ENCODE measurements at regions of chr2 and their contacts with region 1.

Region 1: DNA sequence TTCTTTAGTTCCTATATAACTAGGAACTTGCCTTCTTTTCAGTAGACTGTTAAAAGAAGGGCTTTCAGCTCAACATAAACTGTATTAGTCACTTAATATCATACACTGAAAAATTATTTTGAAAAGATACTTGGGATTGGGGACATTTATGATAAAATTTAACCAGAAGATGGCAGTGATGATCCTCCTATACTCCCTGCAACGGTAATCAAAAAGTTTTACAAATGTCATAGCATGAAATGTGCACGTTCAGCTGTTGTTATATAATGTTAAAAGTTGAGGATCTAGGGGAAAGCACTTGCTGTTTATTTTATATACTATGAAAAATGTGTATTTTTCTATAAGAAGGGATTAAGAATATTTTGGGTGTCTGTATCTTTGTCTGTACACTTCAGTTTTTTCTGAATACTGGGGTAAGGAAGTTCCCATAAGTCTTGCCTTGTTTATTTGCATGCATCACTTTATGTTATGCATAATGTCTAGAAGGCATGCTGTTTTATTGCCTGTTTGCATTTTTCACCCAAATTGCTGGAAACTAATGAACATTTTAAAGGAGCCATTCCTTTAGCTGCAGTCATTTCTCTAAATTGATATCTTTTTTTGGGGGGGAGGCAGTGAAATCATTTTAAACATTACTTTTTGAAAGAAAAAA is 19.0 kb downstream of the DYNC1I2 start:
- DNase-seq: no peak
- H3K4me3 Mint-ChIP-seq: no peak overlapping the region
- H3K27ac Mint-ChIP-seq: no peak overlapping the region
- H3K4me1 Mint-ChIP-seq: peaks cover 6% of the 10 kb centered on the region
- H3K27me3 Mint-ChIP-seq: no peaks in the 10 kb centered on the region

Region 2: DNA sequence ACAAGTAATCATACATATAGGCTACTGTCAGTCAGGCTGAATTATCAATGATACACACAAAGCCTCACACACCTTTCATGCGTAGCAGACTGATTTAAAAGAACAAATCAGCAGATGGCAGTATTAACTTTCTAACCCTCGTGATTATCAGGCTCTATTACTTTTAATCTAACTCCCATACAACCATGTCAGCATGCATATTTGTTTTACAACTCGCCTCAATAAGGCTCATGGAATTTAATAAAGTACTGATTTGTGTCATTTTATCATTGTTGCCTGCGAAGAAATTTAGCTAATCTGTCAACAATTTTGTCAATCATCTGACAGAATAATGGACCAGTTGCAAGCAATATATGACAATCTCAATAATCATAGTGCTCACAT is 105.0 kb after region 1 on chr2:
- intact Hi-C with region 1: loop called (anchors 5 kb)
- DNase-seq: no peak
- H3K4me3 Mint-ChIP-seq: no peak overlapping the region
- H3K27ac Mint-ChIP-seq: no peak overlapping the region
- H3K4me1 Mint-ChIP-seq: peaks cover 1% of the 10 kb centered on the region
- H3K27me3 Mint-ChIP-seq: no peaks in the 10 kb centered on the region

Region 3: GRCh38 chr2:172084734-172085459 is 378.6 kb after region 1 on chr2:
- intact Hi-C with region 1: loop called (anchors 5 kb)
- DNase-seq: no peak
- H3K4me3 Mint-ChIP-seq: peak overlapping the region; percentile 75
- H3K27ac Mint-ChIP-seq: peak overlapping the region; percentile 58
- H3K4me1 Mint-ChIP-seq: peaks cover 33% of the 10 kb centered on the region
- H3K27me3 Mint-ChIP-seq: peaks cover 92% of the 10 kb centered on the region

Region 4: DNA sequence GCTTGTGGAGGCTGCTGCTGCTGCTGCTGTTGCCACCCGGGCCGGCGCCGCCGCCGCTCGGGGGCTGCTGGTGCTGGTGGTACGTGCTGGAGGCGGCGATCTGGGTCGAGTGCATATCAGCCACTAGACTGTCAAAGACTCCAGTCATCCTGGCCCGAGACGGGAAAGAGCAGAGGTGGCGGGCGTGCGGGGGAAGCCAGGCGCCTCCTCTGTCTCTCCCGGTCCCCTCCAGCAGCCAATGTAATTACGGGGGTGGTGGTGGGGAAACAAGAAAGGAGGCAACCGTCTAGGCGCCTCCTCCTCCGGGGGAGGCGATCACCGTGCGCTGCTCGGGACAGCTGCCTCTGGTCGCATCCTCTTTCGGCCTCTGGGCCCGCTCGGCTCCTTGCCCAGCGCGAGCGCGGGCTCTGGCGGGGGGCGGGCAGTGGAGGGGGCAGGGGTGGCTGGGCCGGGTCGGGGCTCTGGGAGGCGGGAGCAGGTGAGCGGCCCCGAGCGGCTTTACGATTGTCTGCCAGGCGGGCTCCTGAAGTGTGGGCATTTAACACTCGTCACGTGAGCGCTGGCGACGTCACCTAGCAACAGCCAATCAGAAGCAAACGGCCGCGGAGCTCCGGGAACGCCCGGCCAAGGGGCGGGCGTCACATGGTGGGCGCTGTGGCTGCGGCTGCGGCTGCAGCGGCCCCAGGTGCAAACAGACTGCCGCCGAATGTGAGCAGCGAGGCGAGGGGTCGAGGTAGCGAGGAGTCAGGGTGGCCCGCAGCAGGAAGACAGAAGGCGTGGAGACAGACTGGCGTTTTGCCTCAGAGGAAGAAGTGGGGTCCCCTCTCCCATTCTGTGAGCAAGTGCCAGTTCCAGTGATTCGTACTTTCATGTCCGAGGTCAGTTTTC is 396.4 kb after region 1 on chr2 and contains the start of gene DLX2:
- intact Hi-C with region 1: loop called (anchors 2 kb)
- DNase-seq: peak; percentile 54
- H3K4me3 Mint-ChIP-seq: peak within 1 kb of the TSS; percentile 77
- H3K27ac Mint-ChIP-seq: no peak within 1 kb of the TSS
- H3K4me1 Mint-ChIP-seq: peaks cover 42% of the 10 kb centered on the region
- H3K27me3 Mint-ChIP-seq: peaks cover 66% of the 10 kb centered on the region
- total RNA-seq, gene DLX2: 0.14 TPM in 1 of 2 replicates, not detected in the other

Region 5: GRCh38 chr2:172128484-172128883 is 422.2 kb after region 1 on chr2:
- intact Hi-C with region 1: loop called (anchors 5 kb)
- DNase-seq: no peak
- H3K4me3 Mint-ChIP-seq: no peak overlapping the region
- H3K27ac Mint-ChIP-seq: no peak overlapping the region
- H3K4me1 Mint-ChIP-seq: peaks cover 1% of the 10 kb centered on the region
- H3K27me3 Mint-ChIP-seq: peaks cover 14% of the 10 kb centered on the region

Region 6: DNA sequence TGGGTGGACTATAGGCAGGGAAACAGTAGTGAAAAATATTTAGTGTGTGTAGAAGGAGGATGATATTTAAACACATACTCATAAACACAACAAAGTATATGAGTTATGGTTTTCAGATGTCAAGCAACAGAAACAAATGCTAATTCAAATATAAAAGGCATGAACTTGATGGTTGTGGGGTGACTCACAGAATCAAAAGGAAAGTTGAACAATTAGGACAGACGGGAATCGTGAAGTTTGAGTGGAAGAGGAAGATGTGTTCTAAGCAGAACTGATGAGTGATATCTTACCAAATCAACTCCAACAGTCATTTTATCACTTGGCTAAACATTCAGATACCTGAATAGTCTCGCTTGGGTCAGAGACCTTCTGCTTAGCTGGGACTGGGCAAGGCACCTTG is 667.5 kb after region 1 on chr2:
- intact Hi-C with region 1: no loop called
- DNase-seq: no peak
- H3K4me3 Mint-ChIP-seq: no peak overlapping the region
- H3K27ac Mint-ChIP-seq: no peak overlapping the region
- H3K4me1 Mint-ChIP-seq: no peaks in the 10 kb centered on the region
- H3K27me3 Mint-ChIP-seq: peaks cover 6% of the 10 kb centered on the region

Measured in activated T-helper 2 cell treated with anti-CD3 and anti-CD28 coated beads, Interferon-gamma antibody, Interleukin-2, Interleukin-4, amounts not matched to agents 10 μg/mL and 5 μg/mL and 100 μg/mL, durations not matched to agents 14 hours and 24 hours and 36 hours (primary cell).